PC-9 (cell line): ENCODE measurements at regions of chr6 and their contacts with region 1.

Region 1: DNA sequence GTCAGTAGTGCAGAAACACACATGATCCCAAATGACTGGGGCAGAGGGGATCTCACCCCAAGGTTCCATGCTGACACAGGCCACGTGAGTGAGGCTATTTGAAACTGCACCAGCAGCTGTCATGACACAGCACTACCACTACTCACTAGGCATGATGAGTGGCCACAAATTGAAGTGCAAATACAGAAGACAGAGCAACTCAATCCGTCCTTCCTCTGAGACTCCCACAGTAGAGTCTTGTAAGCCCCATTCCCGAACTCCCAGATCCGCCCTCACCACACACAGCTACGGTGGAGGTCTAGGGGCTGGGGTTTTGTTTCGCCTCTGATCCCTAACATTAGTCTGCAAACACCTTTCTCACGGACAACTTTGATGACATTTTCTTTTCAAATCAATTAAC is 113.3 kb upstream of the NUP153 start:
- DNase-seq: no peak
- H3K4me3 ChIP-seq: no peak overlapping the region
- H3K27ac ChIP-seq: no peak overlapping the region
- H3K4me1 ChIP-seq: no peaks in the 10 kb centered on the region
- H3K27me3 ChIP-seq: no peaks in the 10 kb centered on the region
- CTCF ChIP-seq: no peak

Region 2: DNA sequence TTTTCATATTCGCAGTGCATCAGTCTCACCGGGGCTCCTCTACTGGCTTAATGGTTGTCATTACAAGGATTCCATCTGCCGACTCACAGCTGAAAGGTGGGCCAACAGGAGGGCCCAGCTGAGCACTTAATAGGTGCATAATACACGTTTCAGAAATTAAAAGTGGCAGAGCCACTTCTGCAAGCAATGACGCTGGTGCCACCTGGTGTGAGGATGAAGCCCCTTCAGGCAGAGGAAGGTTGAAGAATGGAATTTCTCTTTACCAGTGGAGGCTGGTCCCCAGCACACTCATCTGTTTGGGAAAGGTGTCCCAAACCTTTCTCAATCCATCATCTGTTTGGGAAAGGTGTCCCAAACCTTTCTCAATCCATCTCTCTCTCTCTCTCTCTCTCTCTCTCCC is 726.4 kb before region 1 on chr6:
- CTCF ChIA-PET with region 1: no interaction called
- POLR2A ChIA-PET with region 1: no interaction called
- intact Hi-C with region 1: no loop called
- DNase-seq: peak in 1 of 2 experiments; percentile 23
- H3K4me3 ChIP-seq: no peak overlapping the region
- H3K27ac ChIP-seq: no peak overlapping the region
- H3K4me1 ChIP-seq: 0 out of 2 replicates have a peak, but pooled peaks cover 4% of the 10 kb centered on the region
- H3K27me3 ChIP-seq: no peaks in the 10 kb centered on the region
- CTCF ChIP-seq: peak; percentile 57

Region 3: DNA sequence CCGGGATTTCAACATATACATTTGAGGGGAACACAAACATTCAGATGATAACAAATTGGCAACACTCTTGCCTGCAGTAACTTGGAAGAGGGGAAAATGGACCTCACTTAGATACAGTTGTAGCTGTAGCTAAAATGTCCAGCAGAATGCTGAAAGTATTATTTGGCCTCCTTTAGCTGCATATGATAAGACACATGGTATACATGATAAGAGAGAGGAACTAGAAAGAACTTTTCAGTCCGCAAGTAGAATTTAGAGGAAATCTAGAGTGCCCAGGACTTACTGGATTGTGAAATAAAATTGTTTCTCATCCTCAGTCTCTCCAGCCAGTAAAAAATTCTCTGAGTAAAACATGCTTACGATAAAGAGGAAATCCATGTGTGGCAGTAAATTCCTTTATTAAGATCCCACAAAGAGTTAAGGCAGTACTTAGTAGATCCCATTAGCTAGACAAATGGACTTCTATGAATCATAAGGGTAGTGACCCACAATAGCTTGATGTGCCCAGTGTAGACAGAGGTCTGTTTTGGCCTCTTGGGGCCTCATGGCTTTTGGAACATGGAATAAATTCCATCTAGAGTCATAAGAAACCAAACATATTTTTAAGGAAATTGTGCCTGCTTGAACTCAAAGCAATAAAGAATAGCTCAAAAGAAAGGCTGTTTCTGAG is 626.8 kb before region 1 on chr6:
- CTCF ChIA-PET with region 1: no interaction called
- POLR2A ChIA-PET with region 1: no interaction called
- intact Hi-C with region 1: no loop called
- DNase-seq: no peak
- H3K4me3 ChIP-seq: no peak overlapping the region
- H3K27ac ChIP-seq: no peak overlapping the region
- H3K4me1 ChIP-seq: no peaks in the 10 kb centered on the region
- H3K27me3 ChIP-seq: no peaks in the 10 kb centered on the region
- CTCF ChIP-seq: no peak

Region 4: DNA sequence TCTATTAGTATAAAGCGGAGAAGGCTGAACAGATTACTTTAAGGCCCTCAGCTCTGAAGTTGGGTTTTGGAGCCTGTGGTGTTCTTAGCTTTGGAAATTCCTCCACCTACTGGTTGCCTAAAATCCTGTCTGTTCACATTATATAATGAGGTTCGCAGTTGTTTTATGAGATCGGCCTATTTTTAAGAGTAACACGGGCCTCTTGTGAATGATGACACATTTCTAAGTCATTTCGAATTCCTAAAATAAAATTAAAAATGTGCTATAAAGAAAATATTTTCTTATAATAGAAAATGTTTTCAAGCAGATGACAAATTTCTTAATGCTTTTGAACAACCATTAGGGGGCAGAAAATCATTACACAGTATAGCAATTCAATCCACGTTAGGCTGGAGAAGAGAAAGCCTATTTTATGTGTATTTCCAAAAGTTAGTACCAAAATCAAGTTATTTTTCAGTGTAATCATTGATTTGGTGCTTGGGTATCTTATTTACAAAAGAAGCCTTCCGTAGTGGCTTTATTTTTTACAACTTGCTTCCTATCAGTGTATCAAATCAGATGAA is 235.7 kb before region 1 on chr6:
- CTCF ChIA-PET with region 1: no interaction called
- POLR2A ChIA-PET with region 1: no interaction called
- intact Hi-C with region 1: loop called (anchors 2 kb)
- DNase-seq: no peak
- H3K4me3 ChIP-seq: no peak overlapping the region
- H3K27ac ChIP-seq: no peak overlapping the region
- H3K4me1 ChIP-seq: peaks cover 5% of the 10 kb centered on the region; the same call in 1 of the 2 replicates
- H3K27me3 ChIP-seq: no peaks in the 10 kb centered on the region
- CTCF ChIP-seq: peak; percentile 90

Region 5: DNA sequence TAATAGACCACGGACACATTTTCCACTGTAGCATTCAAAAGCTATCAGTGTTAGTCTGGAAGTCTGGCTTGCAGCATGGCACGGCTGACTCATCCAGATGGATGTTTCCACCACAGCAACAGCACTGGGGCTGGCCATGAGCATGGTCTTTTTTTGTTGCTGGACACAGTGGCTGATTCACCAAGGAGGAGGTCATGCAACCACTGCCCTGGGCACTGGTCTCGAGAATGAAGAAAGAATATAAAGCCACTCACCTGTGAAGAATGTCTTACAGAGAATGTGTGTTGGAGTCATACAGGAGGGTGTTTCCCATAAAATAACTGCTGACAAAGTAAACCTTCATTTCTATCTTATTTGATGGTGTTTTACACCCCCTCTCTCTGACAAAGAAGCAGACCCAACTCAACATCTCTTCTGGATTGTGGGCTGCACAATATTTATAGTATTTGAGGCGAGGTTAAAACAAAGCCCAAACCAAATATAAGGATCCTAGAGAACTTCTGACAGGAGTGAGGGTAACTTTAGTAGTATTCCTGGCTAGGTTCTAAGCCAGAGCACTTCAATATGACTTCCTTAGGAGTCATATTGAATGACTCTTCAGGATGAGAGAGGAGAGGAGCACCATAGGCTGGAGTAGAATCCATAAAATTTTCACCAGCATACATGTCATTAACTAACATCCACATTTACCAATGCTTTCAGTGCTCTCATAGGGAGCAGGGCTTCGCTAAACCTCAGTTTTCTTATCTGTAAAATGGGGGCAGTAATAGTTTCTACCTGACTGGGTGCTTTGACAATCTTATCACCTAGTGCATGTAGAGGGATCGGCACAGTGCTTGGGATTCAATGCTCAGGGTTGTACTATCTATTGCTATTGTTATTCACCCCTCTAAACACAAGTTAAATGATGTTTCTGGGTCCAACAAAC is 46.0 kb after region 1 on chr6:
- CTCF ChIA-PET with region 1: interaction called, 18 read pairs
- POLR2A ChIA-PET with region 1: no interaction called
- intact Hi-C with region 1: no loop called
- DNase-seq: peak; percentile 93 to 99
- H3K4me3 ChIP-seq: peak overlapping the region; percentile 24; the same call in 1 of the 2 replicates
- H3K27ac ChIP-seq: peak overlapping the region; percentile 94
- H3K4me1 ChIP-seq: peaks cover 57% of the 10 kb centered on the region
- H3K27me3 ChIP-seq: no peaks in the 10 kb centered on the region
- CTCF ChIP-seq: no peak

Region 6: GRCh38 chr6:17987576-17988421 is 167.7 kb after region 1 on chr6 and contains the start of gene KIF13A:
- CTCF ChIA-PET with region 1: no interaction called
- POLR2A ChIA-PET with region 1: no interaction called
- intact Hi-C with region 1: loop called (anchors 2 kb)
- DNase-seq: peak; percentile 46 to 69
- H3K4me3 ChIP-seq: peak within 1 kb of the TSS; percentile 98
- H3K27ac ChIP-seq: peak within 1 kb of the TSS; percentile 45
- H3K4me1 ChIP-seq: peaks cover 59% of the 10 kb centered on the region
- H3K27me3 ChIP-seq: no peaks in the 10 kb centered on the region
- CTCF ChIP-seq: no peak
- total RNA-seq, gene KIF13A: 48.6 and 52.2 TPM in 2 replicates

Region 7: GRCh38 chr6:18207438-18207837 is 387.4 kb after region 1 on chr6:
- CTCF ChIA-PET with region 1: no interaction called
- POLR2A ChIA-PET with region 1: no interaction called
- intact Hi-C with region 1: no loop called
- DNase-seq: no peak
- H3K4me3 ChIP-seq: no peak overlapping the region
- H3K27ac ChIP-seq: no peak overlapping the region
- H3K4me1 ChIP-seq: no peaks in the 10 kb centered on the region
- H3K27me3 ChIP-seq: no peaks in the 10 kb centered on the region
- CTCF ChIP-seq: no peak

Region 8: GRCh38 chr6:18284261-18284660 is 464.2 kb after region 1 on chr6:
- CTCF ChIA-PET with region 1: interaction called, 11 read pairs
- POLR2A ChIA-PET with region 1: no interaction called
- intact Hi-C with region 1: no loop called
- DNase-seq: no peak
- H3K4me3 ChIP-seq: no peak overlapping the region
- H3K27ac ChIP-seq: no peak overlapping the region
- H3K4me1 ChIP-seq: peaks cover 12% of the 10 kb centered on the region; the same call in 1 of the 2 replicates
- H3K27me3 ChIP-seq: no peaks in the 10 kb centered on the region
- CTCF ChIP-seq: no peak